ENCODE measurements at regions of chr6 and their contacts with region 1.

Region 1: GRCh38 chr6:130697995-130698535 is 129.1 kb upstream of the SMLR1 start:
- DNase-seq: peak in 7 of 9 donors; percentile 16 to 60 (median 58)
- ATAC-seq: peak; percentile 81
- H3K4me3 ChIP-seq: no peak overlapping the region
- H3K4me3 Mint-ChIP-seq: peak overlapping the region in 5 of 10 donors; percentile 24 to 57 (median 41)
- H3K27ac ChIP-seq: no peak overlapping the region
- H3K27ac Mint-ChIP-seq: peak overlapping the region in 1 of 9 donors; percentile 70
- H3K4me1 ChIP-seq: peaks cover 6 to 13% of the 10 kb centered on the region in 2 donors
- H3K4me1 Mint-ChIP-seq: peaks cover 11 to 63% (median 40%) of the 10 kb centered on the region in 7 donors
- H3K27me3 ChIP-seq: no peaks in the 10 kb centered on the region
- H3K27me3 Mint-ChIP-seq: peaks cover 0 to 5% (median 4%) of the 10 kb centered on the region in 5 donors

Region 2: DNA sequence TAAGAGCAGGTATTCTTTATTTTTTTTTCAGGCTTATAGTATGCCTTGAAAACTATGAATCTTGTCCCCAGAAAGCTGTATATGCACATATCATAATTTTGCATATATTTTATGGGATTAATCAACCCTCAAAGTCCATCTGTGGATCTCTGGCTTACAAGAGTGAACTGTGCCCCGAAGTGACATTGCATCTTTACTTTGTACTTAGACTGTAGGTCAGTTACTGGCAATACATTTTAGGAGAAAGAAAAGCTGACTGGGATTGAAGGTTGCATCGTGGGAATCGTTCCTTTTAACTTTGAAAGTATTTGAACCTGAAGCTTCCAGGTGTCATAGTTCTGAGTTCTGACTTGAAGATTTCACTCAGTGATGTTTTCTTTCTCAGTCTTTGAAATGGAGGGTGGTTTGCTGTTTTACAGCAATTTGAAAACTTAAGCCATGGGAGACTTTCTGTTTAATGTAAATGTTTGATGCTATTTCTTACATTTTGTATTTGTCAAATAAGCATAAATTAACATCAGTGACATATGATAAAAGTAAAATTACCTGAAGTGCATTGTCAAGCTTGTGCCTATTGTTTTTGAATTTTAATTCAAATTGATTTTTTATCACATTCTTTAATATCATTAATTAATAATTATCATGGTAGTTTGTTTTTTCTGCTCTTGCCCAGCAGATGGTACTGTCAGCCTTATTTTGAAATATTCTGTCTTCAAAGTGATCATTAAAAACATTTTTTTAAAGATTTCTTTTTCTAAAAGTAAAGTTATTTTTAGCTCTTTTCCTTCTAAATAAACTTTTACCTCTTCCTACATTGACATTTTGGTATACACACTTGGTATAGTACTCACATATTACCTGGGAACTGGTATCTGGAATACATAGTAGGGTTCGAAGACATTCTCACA is 650.7 kb before region 1 on chr6:
- CTCF ChIA-PET with region 1: no interaction called
- POLR2A ChIA-PET with region 1: no interaction called
- intact Hi-C with region 1: loop called in 1 of 2 experiments (anchors 1 kb)
- DNase-seq: no peak
- ATAC-seq: no peak
- H3K4me3 ChIP-seq: no peak overlapping the region
- H3K4me3 Mint-ChIP-seq: no peak overlapping the region
- H3K27ac ChIP-seq: no peak overlapping the region
- H3K27ac Mint-ChIP-seq: peak overlapping the region in 2 of 9 donors; percentile 12 to 24
- H3K4me1 ChIP-seq: no peaks in the 10 kb centered on the region
- H3K4me1 Mint-ChIP-seq: peaks cover 9 to 27% (median 15%) of the 10 kb centered on the region in 7 donors
- H3K27me3 ChIP-seq: no peaks in the 10 kb centered on the region
- H3K27me3 Mint-ChIP-seq: no peaks in the 10 kb centered on the region

Region 3: DNA sequence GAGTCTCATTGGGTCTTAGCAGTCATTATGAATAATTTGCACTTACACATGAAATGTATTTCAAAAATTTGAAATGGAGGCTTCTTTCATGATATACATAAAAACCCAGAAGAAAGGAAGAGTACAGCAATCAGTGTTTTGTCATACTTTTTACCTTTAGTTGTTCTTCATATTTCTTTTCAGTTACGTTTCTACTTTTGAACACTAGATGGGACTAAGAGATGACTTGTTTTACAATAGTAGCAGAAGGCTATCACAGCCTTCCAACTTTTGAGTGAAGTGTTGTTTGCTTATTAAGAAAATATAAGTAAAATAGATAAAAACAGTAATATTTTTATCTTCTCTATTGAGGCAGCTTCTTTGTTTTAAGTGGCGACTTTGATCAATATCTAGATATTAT is 621.6 kb before region 1 on chr6:
- CTCF ChIA-PET with region 1: no interaction called
- POLR2A ChIA-PET with region 1: no interaction called
- intact Hi-C with region 1: loop called in 1 of 2 experiments (anchors 5 kb)
- DNase-seq: peak in 5 of 9 donors; percentile 7 to 36 (median 27)
- ATAC-seq: no peak
- H3K4me3 ChIP-seq: no peak overlapping the region
- H3K4me3 Mint-ChIP-seq: peak overlapping the region in 1 of 10 donors; percentile 37
- H3K27ac ChIP-seq: no peak overlapping the region
- H3K27ac Mint-ChIP-seq: no peak overlapping the region
- H3K4me1 ChIP-seq: no peaks in the 10 kb centered on the region
- H3K4me1 Mint-ChIP-seq: peaks cover 12 to 31% (median 23%) of the 10 kb centered on the region in 7 donors
- H3K27me3 ChIP-seq: no peaks in the 10 kb centered on the region
- H3K27me3 Mint-ChIP-seq: no peaks in the 10 kb centered on the region

Region 4: DNA sequence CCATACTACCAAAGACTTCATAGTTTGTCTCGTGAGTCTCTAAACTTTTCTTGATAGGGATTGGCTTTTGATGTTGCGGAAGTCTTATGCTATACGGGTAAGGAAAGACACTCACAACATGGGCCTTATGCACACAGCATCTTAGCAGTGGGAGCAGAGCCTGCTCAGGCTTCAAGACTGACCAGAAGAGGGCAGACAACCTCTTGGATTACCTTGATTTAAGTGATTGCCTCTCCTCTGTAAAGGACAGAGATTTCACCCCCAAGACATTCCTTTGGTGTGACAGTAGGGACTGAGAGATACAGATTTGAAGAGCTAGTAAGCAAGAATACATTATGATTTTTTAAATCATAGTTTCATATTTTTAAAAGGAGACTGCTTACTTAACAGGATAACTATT is 404.3 kb before region 1 on chr6:
- CTCF ChIA-PET with region 1: interaction called, 4 read pairs
- POLR2A ChIA-PET with region 1: no interaction called
- intact Hi-C with region 1: loop called (anchors 1 kb)
- DNase-seq: peak in 5 of 9 donors; percentile 24 to 53 (median 46)
- ATAC-seq: peak; percentile 73
- H3K4me3 ChIP-seq: no peak overlapping the region
- H3K4me3 Mint-ChIP-seq: no peak overlapping the region
- H3K27ac ChIP-seq: no peak overlapping the region
- H3K27ac Mint-ChIP-seq: peak overlapping the region in 1 of 9 donors; percentile 53
- H3K4me1 ChIP-seq: no peaks in the 10 kb centered on the region
- H3K4me1 Mint-ChIP-seq: peaks cover 0 to 3% (median 0%) of the 10 kb centered on the region in 7 donors
- H3K27me3 ChIP-seq: no peaks in the 10 kb centered on the region
- H3K27me3 Mint-ChIP-seq: peaks cover 0 to 27% (median 3%) of the 10 kb centered on the region in 5 donors

Region 5: GRCh38 chr6:130322673-130323268 is 375.3 kb before region 1 on chr6:
- CTCF ChIA-PET with region 1: interaction called, 29 read pairs
- POLR2A ChIA-PET with region 1: no interaction called
- intact Hi-C with region 1: loop called (anchors 1 kb)
- DNase-seq: peak in 8 of 9 donors; percentile 30 to 61 (median 56)
- ATAC-seq: peak; percentile 61
- H3K4me3 ChIP-seq: no peak overlapping the region
- H3K4me3 Mint-ChIP-seq: no peak overlapping the region
- H3K27ac ChIP-seq: no peak overlapping the region
- H3K27ac Mint-ChIP-seq: no peak overlapping the region
- H3K4me1 ChIP-seq: no peaks in the 10 kb centered on the region
- H3K4me1 Mint-ChIP-seq: peaks cover 0 to 16% (median 5%) of the 10 kb centered on the region in 7 donors
- H3K27me3 ChIP-seq: no peaks in the 10 kb centered on the region
- H3K27me3 Mint-ChIP-seq: peaks cover 0 to 33% (median 0%) of the 10 kb centered on the region in 5 donors

Region 6: GRCh38 chr6:130365166-130366106 is 332.6 kb before region 1 on chr6 and contains the start of gene TMEM200A:
- CTCF ChIA-PET with region 1: interaction called, 4 read pairs
- POLR2A ChIA-PET with region 1: no interaction called
- intact Hi-C with region 1: loop called (anchors 1 kb)
- DNase-seq: peak in 6 of 9 donors; percentile 7 to 63 (median 21)
- ATAC-seq: peak; percentile 64
- H3K4me3 ChIP-seq: peak within 1 kb of the TSS; percentile 68
- H3K4me3 Mint-ChIP-seq: peak within 1 kb of the TSS; percentile 66 to 90 (median 83)
- H3K27ac ChIP-seq: no peak within 1 kb of the TSS
- H3K27ac Mint-ChIP-seq: peak within 1 kb of the TSS in 2 of 9 donors; percentile 55 to 64
- H3K4me1 ChIP-seq: peaks cover 4 to 5% of the 10 kb centered on the region in 2 donors
- H3K4me1 Mint-ChIP-seq: peaks cover 7 to 26% (median 17%) of the 10 kb centered on the region in 7 donors
- H3K27me3 ChIP-seq: no peaks in the 10 kb centered on the region
- H3K27me3 Mint-ChIP-seq: peaks cover 7 to 64% (median 38%) of the 10 kb centered on the region in 5 donors
- total RNA-seq, gene TMEM200A: 0.19 to 7.2 (median 0.99) TPM in 4 of 5 experiments, not detected in the other

Region 7: DNA sequence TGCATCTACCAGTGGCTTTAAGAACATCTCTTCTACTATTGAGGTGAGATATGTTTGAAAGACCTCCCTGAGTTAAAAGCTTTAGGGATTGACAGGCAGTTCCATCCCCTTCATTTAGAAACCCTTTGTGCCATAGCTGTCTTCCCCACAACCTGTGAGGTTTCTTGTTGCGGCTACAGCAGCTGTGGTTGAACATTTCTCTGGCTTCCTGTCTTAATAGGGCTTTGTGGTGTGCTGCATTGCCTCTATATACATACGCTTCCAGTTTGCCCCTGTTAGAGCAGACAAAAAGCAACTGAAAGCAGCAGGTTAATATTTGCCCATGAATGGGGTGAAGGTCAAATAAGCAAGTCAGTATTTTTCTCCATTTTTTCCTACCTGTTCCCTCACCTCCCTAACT is 122.1 kb before region 1 on chr6:
- CTCF ChIA-PET with region 1: no interaction called
- POLR2A ChIA-PET with region 1: no interaction called
- intact Hi-C with region 1: loop called in 1 of 2 experiments (anchors 1 kb)
- DNase-seq: peak; percentile 5 to 82 (median 72)
- ATAC-seq: peak; percentile 94
- H3K4me3 ChIP-seq: peak overlapping the region; percentile 31
- H3K4me3 Mint-ChIP-seq: peak overlapping the region; percentile 35 to 82 (median 73)
- H3K27ac ChIP-seq: peak overlapping the region; percentile 8
- H3K27ac Mint-ChIP-seq: peak overlapping the region; percentile 29 to 91 (median 67)
- H3K4me1 ChIP-seq: peaks cover 25 to 39% of the 10 kb centered on the region in 2 donors
- H3K4me1 Mint-ChIP-seq: peaks cover 32 to 62% (median 48%) of the 10 kb centered on the region in 7 donors
- H3K27me3 ChIP-seq: no peaks in the 10 kb centered on the region
- H3K27me3 Mint-ChIP-seq: peaks cover 0 to 4% (median 0%) of the 10 kb centered on the region in 5 donors

Measured in naive thymus-derived CD4-positive, alpha-beta T cell (primary cell).